HepG2 (cell line): ENCODE measurements at regions of chr9 and their contacts with region 1.

Region 1: DNA sequence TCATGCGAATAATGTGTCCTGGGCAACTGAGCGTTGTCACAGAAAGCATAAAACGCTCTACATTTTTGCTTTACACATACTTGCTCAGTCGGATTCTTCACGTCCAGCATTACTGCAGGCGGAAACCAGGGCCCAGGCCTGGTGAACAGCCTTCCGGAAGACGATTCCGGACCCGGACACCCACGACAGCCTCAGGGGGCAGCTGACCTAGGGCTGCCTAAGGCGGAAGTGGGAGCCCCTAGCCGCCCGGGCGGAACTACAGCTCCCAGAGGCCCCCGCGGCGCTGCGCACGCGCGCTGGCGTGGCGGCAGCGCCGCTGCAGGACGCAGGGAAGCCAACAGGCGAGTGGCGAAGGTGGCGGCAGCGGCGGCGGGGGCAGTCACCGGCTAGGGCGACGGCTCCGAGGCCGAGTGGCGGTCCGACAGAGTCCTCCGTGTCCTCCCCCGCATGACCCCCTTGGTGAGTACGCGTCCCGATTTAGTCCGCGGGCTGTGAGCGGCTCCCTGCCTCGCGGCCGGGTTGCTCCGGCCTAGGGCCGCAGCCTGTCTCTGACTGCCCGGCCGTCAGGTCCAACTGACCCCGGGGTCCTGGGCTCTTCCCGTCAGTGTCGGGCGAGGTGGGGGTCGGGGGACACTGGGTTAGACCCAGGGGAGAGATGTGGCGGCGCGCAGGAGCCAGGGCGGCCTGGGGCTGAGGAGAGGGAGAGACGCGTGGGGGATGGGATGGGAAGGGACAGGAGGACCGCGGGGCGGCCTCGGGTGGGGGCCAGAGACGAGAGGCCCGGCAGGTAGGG is at the start of gene GAPVD1:
- DNase-seq: peak; percentile 93
- ATAC-seq: peak; percentile 98
- H3K4me3 ChIP-seq: peak within 1 kb of the TSS; percentile 83 to 99 (median 87)
- H3K27ac ChIP-seq: peak within 1 kb of the TSS; percentile 94
- H3K4me1 ChIP-seq: peaks cover 54% of the 10 kb centered on the region
- H3K27me3 ChIP-seq: no peaks in the 10 kb centered on the region
- CTCF ChIP-seq: peak; percentile 56
- EP300 ChIP-seq: no peak
- POLR2A ChIP-seq: peak; percentile 85 to 92
- RAD21 ChIP-seq: peak; percentile 46; the same call in 1 of the 2 replicates
- total RNA-seq, gene GAPVD1: 33.2 and 47.0 TPM in 2 replicates

Region 2: GRCh38 chr9:125172031-125172755 is 89.5 kb before region 1 on chr9:
- CTCF ChIA-PET with region 1: no interaction called
- POLR2A ChIA-PET with region 1: no interaction called
- in situ Hi-C with region 1: no loop called
- intact Hi-C with region 1: no loop called
- DNase-seq: no peak
- ATAC-seq: no peak
- H3K4me3 ChIP-seq: no peak overlapping the region
- H3K27ac ChIP-seq: no peak overlapping the region
- H3K4me1 ChIP-seq: peaks cover under 1% of the 10 kb centered on the region; the same call in 1 of the 2 replicates
- H3K27me3 ChIP-seq: no peaks in the 10 kb centered on the region
- CTCF ChIP-seq: no peak
- EP300 ChIP-seq: no peak
- POLR2A ChIP-seq: no peak
- RAD21 ChIP-seq: no peak

Region 3: DNA sequence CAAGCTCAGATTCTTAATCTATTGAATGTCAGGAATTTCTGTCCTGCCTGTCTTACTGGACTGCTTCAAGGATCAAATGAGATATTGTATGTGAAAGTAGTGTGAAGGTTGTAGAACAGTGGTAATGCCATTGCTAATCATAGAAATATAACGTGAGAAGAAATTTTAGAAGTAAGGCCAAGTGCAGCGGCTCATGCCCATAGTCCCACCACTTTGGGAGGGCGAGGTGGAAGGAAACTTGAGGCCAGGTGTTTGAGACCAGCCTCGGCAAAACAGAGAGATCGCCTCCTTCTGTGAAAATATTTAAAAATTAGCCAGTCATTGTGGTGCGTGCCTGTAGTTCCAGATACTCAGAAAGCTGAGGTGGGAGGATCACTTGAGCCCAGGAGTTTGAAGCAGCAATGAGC is 15.4 kb before region 1 on chr9:
- CTCF ChIA-PET with region 1: no interaction called
- POLR2A ChIA-PET with region 1: interaction called, 73 read pairs
- in situ Hi-C with region 1: no loop called
- intact Hi-C with region 1: loop called (anchors 1 kb)
- DNase-seq: no peak
- ATAC-seq: no peak
- H3K4me3 ChIP-seq: no peak overlapping the region
- H3K27ac ChIP-seq: no peak overlapping the region
- H3K4me1 ChIP-seq: peaks cover 21% of the 10 kb centered on the region
- H3K27me3 ChIP-seq: no peaks in the 10 kb centered on the region; a peak in 1 of 5 replicates
- CTCF ChIP-seq: no peak
- EP300 ChIP-seq: no peak
- POLR2A ChIP-seq: no peak
- RAD21 ChIP-seq: no peak

Region 4: DNA sequence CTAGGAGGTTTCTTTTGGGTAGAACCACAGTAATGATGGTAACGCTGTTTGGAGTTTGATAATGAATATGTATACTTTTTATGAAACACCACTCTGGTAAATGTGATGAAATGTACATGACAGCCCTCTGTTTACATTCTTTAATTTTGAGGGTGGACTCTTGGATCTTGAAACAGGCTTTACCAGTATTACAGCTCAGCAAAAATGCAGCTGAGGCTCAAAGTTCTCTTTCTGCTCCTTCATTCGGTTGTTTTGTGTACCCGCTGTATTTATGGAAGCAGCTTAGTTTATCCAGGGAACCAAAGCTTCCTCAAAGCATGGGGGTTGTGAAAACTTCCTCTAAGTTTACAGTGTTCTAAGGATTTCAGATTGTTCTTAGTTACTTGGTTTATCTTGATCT is 11.0 kb after region 1 on chr9:
- CTCF ChIA-PET with region 1: no interaction called
- POLR2A ChIA-PET with region 1: interaction called, 14 read pairs
- in situ Hi-C with region 1: no loop called
- intact Hi-C with region 1: no loop called
- DNase-seq: peak; percentile 90
- ATAC-seq: peak; percentile 89
- H3K4me3 ChIP-seq: peak overlapping the region in 2 of 3 experiments; percentile 11 to 40; a peak in 2 of 6 replicates
- H3K27ac ChIP-seq: peak overlapping the region; percentile 81
- H3K4me1 ChIP-seq: peaks cover 76% of the 10 kb centered on the region
- H3K27me3 ChIP-seq: no peaks in the 10 kb centered on the region
- CTCF ChIP-seq: no peak
- EP300 ChIP-seq: peak in 1 of 2 experiments; percentile 91; a peak in 2 of 4 replicates
- POLR2A ChIP-seq: no peak
- RAD21 ChIP-seq: no peak

Region 5: DNA sequence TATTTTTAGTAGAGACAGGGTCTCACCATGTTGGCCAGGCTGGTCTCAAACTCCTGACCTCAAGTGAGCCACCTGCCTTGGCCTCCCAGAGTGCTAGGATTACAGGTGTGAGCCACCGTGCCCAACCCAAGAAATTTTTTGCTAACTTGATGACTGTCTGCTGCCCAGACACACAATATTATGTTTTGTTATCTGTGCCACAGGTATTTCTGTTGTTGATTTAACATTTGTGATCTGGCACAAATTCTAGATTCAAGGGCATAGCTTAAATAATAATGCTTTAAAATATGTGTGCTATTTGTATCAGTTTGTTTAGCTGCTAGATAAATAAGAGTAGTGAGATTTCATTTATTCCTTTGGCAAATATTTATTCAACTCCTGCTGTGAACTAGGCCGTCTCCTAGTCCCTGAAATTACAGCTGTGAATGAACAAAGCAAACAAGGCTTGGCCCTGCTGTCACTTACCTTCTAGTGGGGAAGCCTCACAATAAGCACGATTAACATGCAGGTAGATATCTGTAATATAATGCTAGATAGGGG is 35.2 kb after region 1 on chr9:
- CTCF ChIA-PET with region 1: no interaction called
- POLR2A ChIA-PET with region 1: interaction called, 9 read pairs
- in situ Hi-C with region 1: no loop called
- intact Hi-C with region 1: loop called (anchors 1 kb)
- DNase-seq: peak; percentile 95
- ATAC-seq: peak; percentile 98
- H3K4me3 ChIP-seq: peak overlapping the region in 1 of 3 experiments; percentile 7; a peak in 1 of 6 replicates
- H3K27ac ChIP-seq: peak overlapping the region; percentile 57
- H3K4me1 ChIP-seq: peaks cover 33% of the 10 kb centered on the region
- H3K27me3 ChIP-seq: no peaks in the 10 kb centered on the region
- CTCF ChIP-seq: no peak
- EP300 ChIP-seq: peak; percentile 85
- POLR2A ChIP-seq: no peak
- RAD21 ChIP-seq: no peak

Region 6: GRCh38 chr9:125495172-125496092 is 233.7 kb after region 1 on chr9:
- CTCF ChIA-PET with region 1: no interaction called
- POLR2A ChIA-PET with region 1: no interaction called
- in situ Hi-C with region 1: no loop called
- intact Hi-C with region 1: no loop called
- DNase-seq: no peak
- ATAC-seq: no peak
- H3K4me3 ChIP-seq: no peak overlapping the region
- H3K27ac ChIP-seq: no peak overlapping the region
- H3K4me1 ChIP-seq: peaks cover 26% of the 10 kb centered on the region
- H3K27me3 ChIP-seq: no peaks in the 10 kb centered on the region
- CTCF ChIP-seq: no peak
- EP300 ChIP-seq: no peak
- POLR2A ChIP-seq: no peak
- RAD21 ChIP-seq: no peak